ENCODE measurements at regions of chr19 and their contacts with region 1.

Region 1: GRCh38 chr19:41363753-41364523 is at the start of gene B9D2:
- DNase-seq: peak; percentile 100
- ATAC-seq: peak; percentile 89 to 93
- H3K4me3 ChIP-seq: peak within 1 kb of the TSS; percentile 66
- H3K27ac ChIP-seq: peak within 1 kb of the TSS; percentile 92 to 94
- H3K4me1 ChIP-seq: peaks cover 49% of the 10 kb centered on the region
- CTCF ChIP-seq: no peak
- EP300 ChIP-seq: no peak
- POLR2A ChIP-seq: peak; percentile 80
- RAD21 ChIP-seq: no peak
- polyA plus RNA-seq, gene B9D2: 17.5 and 19.6 TPM in 2 replicates

Region 2: DNA sequence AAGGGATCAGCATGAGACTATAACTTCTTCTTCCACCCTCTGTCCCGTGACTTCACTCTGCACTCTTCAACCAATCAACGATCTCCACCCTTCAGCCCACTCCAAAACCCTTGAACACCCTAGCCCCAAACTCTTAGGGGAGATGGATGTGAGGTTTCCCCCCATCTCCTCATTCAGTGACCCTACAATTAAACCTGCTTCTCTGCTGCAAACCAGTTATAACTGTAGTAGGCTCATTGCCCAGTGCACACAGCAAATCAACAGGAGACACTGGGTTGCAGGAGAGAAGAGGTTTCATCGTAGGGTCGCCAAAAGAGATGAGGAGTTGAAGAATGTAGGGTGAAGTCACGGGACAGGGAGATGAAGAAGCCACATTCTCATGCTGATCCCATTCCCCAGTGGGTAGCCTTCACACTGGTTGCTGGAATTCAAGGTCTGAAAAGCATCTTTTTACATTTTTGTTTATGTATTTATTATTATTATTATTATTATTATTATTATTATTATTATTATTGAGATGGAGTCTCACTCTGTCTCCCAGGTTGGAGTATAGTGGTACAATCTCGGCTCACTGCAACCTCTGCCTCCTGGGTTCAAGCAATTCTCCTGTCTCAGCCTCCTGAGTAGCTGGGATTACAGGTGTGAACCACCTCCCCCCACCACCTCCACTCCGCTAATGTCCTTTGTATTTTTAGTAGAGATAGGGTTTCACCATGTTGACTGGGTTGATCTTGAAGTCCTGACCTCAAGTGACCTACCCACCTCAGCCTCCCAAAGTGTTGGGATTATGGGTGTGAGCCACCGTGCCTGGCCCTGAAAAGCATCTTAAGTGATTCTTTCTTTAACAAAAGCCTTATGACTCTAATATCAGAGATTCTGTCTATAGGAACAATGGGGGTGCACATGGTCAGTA is 176.7 kb before region 1 on chr19:
- CTCF ChIA-PET with region 1: no interaction called
- POLR2A ChIA-PET with region 1: no interaction called
- DNase-seq: no peak
- ATAC-seq: no peak
- H3K4me3 ChIP-seq: no peak overlapping the region
- H3K27ac ChIP-seq: no peak overlapping the region
- H3K4me1 ChIP-seq: peaks cover 38% of the 10 kb centered on the region
- CTCF ChIP-seq: no peak
- EP300 ChIP-seq: no peak
- POLR2A ChIP-seq: no peak
- RAD21 ChIP-seq: no peak

Region 3: GRCh38 chr19:41321600-41322270 is 42.2 kb before region 1 on chr19:
- CTCF ChIA-PET with region 1: interaction called, 11 read pairs
- POLR2A ChIA-PET with region 1: interaction called, 32 read pairs
- DNase-seq: peak; percentile 76 to 95
- ATAC-seq: peak; percentile 10 to 53; a peak in 3 of 6 replicates
- H3K4me3 ChIP-seq: no peak overlapping the region
- H3K27ac ChIP-seq: peak overlapping the region; percentile 81 to 91; a peak in 5 of 6 replicates
- H3K4me1 ChIP-seq: peaks cover 56% of the 10 kb centered on the region
- CTCF ChIP-seq: peak; percentile 88
- EP300 ChIP-seq: no peak
- POLR2A ChIP-seq: no peak
- RAD21 ChIP-seq: peak; percentile 61 to 62; a peak in 4 of 5 replicates

Region 4: DNA sequence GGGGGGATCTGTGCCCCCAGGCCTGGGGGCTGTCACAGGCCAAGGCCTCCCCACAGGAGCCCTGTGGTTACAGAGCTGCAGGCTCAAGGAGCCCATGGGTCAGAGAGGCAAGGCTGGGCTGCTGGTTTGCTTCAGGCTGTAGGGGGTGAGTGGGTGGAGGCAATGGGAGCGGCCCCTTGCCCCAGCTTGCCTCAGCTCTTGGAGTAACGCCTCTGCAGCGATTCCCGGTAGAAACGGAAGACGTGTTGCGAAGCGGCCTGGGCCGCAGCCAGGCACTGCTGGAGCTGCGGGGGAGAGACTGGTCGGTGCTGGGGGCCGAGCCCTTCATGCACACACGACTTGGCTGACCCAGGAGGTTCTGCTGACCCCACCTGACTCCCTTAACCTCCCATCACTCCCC is 22.5 kb after region 1 on chr19:
- CTCF ChIA-PET with region 1: interaction called, 37 read pairs
- POLR2A ChIA-PET with region 1: interaction called, 34 read pairs
- DNase-seq: no peak
- ATAC-seq: peak in 1 of 2 experiments; percentile 27; a peak in 1 of 6 replicates
- H3K4me3 ChIP-seq: no peak overlapping the region
- H3K27ac ChIP-seq: no peak overlapping the region
- H3K4me1 ChIP-seq: no peaks in the 10 kb centered on the region
- CTCF ChIP-seq: no peak
- EP300 ChIP-seq: no peak
- POLR2A ChIP-seq: no peak
- RAD21 ChIP-seq: no peak

Region 5: GRCh38 chr19:41420101-41420880 is 56.4 kb after region 1 on chr19:
- CTCF ChIA-PET with region 1: interaction called, 4 read pairs
- POLR2A ChIA-PET with region 1: interaction called, 12 read pairs
- DNase-seq: no peak
- ATAC-seq: no peak
- H3K4me3 ChIP-seq: no peak overlapping the region
- H3K27ac ChIP-seq: no peak overlapping the region
- H3K4me1 ChIP-seq: no peaks in the 10 kb centered on the region
- CTCF ChIP-seq: no peak
- EP300 ChIP-seq: no peak
- POLR2A ChIP-seq: no peak
- RAD21 ChIP-seq: no peak